ENCODE measurements at regions of chr15 and their contacts with region 1.

Region 1: DNA sequence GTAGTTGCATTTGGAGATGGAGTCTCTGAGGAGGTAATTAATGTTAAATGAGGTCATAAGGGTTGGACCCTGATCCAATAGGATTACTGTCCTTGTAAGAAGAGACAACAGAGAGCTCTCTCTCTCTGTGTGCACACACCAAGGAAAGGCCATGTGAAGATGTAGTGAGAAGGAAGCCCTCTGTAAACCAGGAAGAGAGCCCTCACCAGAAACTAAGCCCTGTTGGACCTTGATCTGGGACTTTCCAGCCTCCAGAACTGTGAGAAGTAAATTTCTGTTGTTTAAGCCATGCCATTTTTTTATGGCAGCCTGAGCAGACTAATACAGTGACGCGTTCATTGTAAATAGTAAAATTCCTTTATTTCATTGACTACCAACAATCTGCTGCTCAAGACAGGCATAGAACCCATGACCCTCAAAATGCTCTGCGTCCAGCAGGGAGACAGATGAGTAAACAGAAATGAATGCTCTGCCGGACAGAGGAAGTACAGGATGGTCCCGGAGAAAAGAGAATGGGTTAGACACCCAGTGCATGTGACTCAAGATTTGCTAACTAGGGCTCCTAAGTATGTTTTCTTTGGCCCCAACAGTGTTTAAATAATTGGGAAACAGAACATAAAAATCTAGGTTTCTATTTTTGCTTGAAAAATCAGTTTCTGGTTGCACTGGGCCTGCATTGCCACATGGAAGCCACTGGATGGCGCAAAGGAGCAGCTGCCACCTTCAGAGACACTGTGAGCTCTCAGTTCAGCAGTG is 37.9 kb upstream of the TNFAIP8L3 start:
- DNase-seq: peak in 1 of 2 experiments; percentile 72
- H3K4me3 ChIP-seq: no peak overlapping the region
- H3K27ac ChIP-seq: no peak overlapping the region
- H3K4me1 ChIP-seq: peaks cover 0 to 3% (median 0%) of the 10 kb centered on the region in 4 experiments; a peak in 1 of 7 replicates
- H3K27me3 ChIP-seq: no peaks in the 10 kb centered on the region
- CTCF ChIP-seq: peak; percentile 88 to 97 (median 93)
- EP300 ChIP-seq: no peak
- POLR2A ChIP-seq: no peak
- RAD21 ChIP-seq: peak; percentile 75 to 80

Region 2: DNA sequence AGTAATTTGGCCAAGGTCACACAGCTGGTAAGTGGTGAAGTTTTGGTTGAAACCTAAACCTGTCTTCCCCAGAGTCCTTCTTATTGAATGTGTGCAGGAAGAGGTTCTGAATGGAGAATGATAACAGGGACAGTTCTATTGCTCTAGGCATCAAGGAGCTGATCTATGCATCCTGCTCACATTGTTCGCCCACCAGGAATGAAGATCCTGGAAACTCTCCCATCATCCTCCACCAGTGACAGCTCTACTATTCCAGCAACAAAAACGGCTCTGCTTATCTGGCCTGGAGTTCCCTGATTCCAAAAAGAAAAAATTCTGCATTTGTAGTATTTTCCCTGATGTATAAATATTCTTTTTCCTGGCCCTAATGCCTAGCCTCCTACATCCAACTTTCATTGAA is 21.5 kb before region 1 on chr15:
- CTCF ChIA-PET with region 1: interaction called, 11 read pairs
- POLR2A ChIA-PET with region 1: interaction called, 3 read pairs
- DNase-seq: no peak
- H3K4me3 ChIP-seq: no peak overlapping the region
- H3K27ac ChIP-seq: no peak overlapping the region
- H3K4me1 ChIP-seq: no peaks in the 10 kb centered on the region
- H3K27me3 ChIP-seq: no peaks in the 10 kb centered on the region
- CTCF ChIP-seq: no peak
- EP300 ChIP-seq: no peak
- POLR2A ChIP-seq: no peak
- RAD21 ChIP-seq: no peak

Region 3: DNA sequence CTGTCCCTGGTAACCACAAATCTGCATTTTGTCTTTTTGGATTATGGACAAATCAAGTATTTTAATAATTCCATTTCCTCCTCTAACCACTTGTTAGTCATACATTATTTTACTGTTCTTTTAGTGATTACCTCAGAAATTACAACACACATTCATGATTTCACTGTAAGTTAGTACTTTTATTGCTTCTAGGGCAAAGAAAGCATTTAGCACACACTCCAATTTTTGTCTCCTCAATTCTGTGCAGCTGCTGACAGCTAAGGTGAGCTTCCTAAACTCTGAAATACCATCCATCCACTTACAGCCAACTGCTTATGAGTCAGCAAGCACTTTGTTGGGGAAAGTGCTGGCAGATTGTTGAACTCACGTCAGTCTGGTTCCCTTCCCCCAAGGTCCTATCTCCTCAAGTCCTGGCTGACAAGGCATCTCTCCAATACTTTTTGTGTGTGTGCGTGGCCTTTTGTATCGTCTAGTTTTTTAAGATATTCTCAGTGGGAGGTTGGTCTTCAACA is 11.5 kb after region 1 on chr15:
- CTCF ChIA-PET with region 1: interaction called, 21 read pairs
- POLR2A ChIA-PET with region 1: no interaction called
- DNase-seq: no peak
- H3K4me3 ChIP-seq: no peak overlapping the region
- H3K27ac ChIP-seq: no peak overlapping the region
- H3K4me1 ChIP-seq: no peaks in the 10 kb centered on the region
- H3K27me3 ChIP-seq: no peaks in the 10 kb centered on the region
- CTCF ChIP-seq: no peak
- EP300 ChIP-seq: no peak
- POLR2A ChIP-seq: no peak
- RAD21 ChIP-seq: no peak

Region 4: GRCh38 chr15:51172193-51172592 is 39.6 kb after region 1 on chr15:
- CTCF ChIA-PET with region 1: interaction called, 16 read pairs
- POLR2A ChIA-PET with region 1: no interaction called
- DNase-seq: no peak
- H3K4me3 ChIP-seq: no peak overlapping the region
- H3K27ac ChIP-seq: no peak overlapping the region
- H3K4me1 ChIP-seq: no peaks in the 10 kb centered on the region
- H3K27me3 ChIP-seq: no peaks in the 10 kb centered on the region
- CTCF ChIP-seq: no peak
- EP300 ChIP-seq: no peak
- POLR2A ChIP-seq: no peak
- RAD21 ChIP-seq: no peak